PC-9 (cell line): ENCODE measurements at regions of chr4 and their contacts with region 1.

Region 1: GRCh38 chr4:99723612-99724011 is 66.0 kb upstream of the C4orf54 start:
- DNase-seq: peak; percentile 64 to 88
- H3K4me3 ChIP-seq: no peak overlapping the region
- H3K27ac ChIP-seq: peak overlapping the region; percentile 74
- H3K4me1 ChIP-seq: peaks cover 38% of the 10 kb centered on the region
- H3K27me3 ChIP-seq: no peaks in the 10 kb centered on the region
- CTCF ChIP-seq: no peak

Region 2: GRCh38 chr4:99134586-99134985 is 589.0 kb before region 1 on chr4:
- CTCF ChIA-PET with region 1: no interaction called
- POLR2A ChIA-PET with region 1: no interaction called
- intact Hi-C with region 1: no loop called
- DNase-seq: no peak
- H3K4me3 ChIP-seq: no peak overlapping the region
- H3K27ac ChIP-seq: no peak overlapping the region
- H3K4me1 ChIP-seq: no peaks in the 10 kb centered on the region
- H3K27me3 ChIP-seq: no peaks in the 10 kb centered on the region
- CTCF ChIP-seq: no peak

Region 3: GRCh38 chr4:99563310-99564186 is 160.1 kb before region 1 on chr4 and contains the start of gene TRMT10A:
- CTCF ChIA-PET with region 1: interaction called, 5 read pairs
- POLR2A ChIA-PET with region 1: no interaction called
- intact Hi-C with region 1: loop called (anchors 1 kb)
- DNase-seq: peak; percentile 87 to 93
- H3K4me3 ChIP-seq: peak within 1 kb of the TSS; percentile 69
- H3K27ac ChIP-seq: peak within 1 kb of the TSS; percentile 92
- H3K4me1 ChIP-seq: 0 out of 2 replicates have a peak, but pooled peaks cover 9% of the 10 kb centered on the region
- H3K27me3 ChIP-seq: no peaks in the 10 kb centered on the region
- CTCF ChIP-seq: no peak
- total RNA-seq, gene TRMT10A: 4.6 and 6.1 TPM in 2 replicates

Region 4: GRCh38 chr4:99655308-99656081 is 68.1 kb before region 1 on chr4:
- CTCF ChIA-PET with region 1: no interaction called
- POLR2A ChIA-PET with region 1: interaction called, 3 read pairs
- intact Hi-C with region 1: loop called (anchors 5 kb)
- DNase-seq: peak; percentile 64 to 77
- H3K4me3 ChIP-seq: no peak overlapping the region
- H3K27ac ChIP-seq: peak overlapping the region; percentile 38
- H3K4me1 ChIP-seq: peaks cover 42% of the 10 kb centered on the region
- H3K27me3 ChIP-seq: no peaks in the 10 kb centered on the region
- CTCF ChIP-seq: no peak

Region 5: GRCh38 chr4:99816545-99817308 is 93.1 kb after region 1 on chr4 and contains the start of gene DAPP1:
- CTCF ChIA-PET with region 1: interaction called, 3 read pairs
- POLR2A ChIA-PET with region 1: interaction called, 4 read pairs
- intact Hi-C with region 1: loop called (anchors 5 kb)
- DNase-seq: peak; percentile 77 to 99
- H3K4me3 ChIP-seq: peak within 1 kb of the TSS; percentile 65
- H3K27ac ChIP-seq: peak within 1 kb of the TSS; percentile 100
- H3K4me1 ChIP-seq: peaks cover 39% of the 10 kb centered on the region
- H3K27me3 ChIP-seq: no peaks in the 10 kb centered on the region
- CTCF ChIP-seq: no peak
- total RNA-seq, gene DAPP1: 7.9 and 9.6 TPM in 2 replicates

Region 6: DNA sequence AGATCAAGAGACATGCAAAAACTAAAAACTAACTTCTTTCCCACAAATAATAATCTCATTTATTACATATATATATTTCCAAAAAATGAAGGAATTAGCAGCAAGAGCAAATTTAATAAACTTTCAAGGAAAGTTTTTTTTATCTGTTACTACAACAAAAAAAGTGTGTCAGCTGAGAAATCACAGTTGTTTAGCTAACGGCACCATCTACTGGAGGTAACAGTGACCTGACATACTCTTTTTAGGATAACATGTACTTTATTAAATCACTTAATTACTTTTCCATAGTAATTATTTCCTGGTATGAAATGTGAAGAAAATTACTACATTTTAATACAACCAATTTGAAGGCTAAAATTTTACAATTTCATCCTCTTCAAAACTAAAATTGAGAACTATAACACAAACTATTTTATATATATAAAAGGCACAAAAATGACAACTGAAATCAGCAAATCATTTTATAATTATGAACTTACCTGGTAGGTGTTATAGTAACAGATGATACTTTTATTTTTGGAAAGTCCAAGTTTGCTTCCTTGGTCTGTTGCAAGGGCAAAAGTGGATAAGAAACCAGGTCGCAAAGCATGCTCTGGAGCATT is 161.6 kb after region 1 on chr4:
- CTCF ChIA-PET with region 1: no interaction called
- POLR2A ChIA-PET with region 1: no interaction called
- intact Hi-C with region 1: loop called (anchors 5 kb)
- DNase-seq: no peak
- H3K4me3 ChIP-seq: no peak overlapping the region
- H3K27ac ChIP-seq: no peak overlapping the region
- H3K4me1 ChIP-seq: no peaks in the 10 kb centered on the region
- H3K27me3 ChIP-seq: no peaks in the 10 kb centered on the region
- CTCF ChIP-seq: peak; percentile 73